ENCODE measurements at regions of chrX and their contacts with region 1.

Region 1: DNA sequence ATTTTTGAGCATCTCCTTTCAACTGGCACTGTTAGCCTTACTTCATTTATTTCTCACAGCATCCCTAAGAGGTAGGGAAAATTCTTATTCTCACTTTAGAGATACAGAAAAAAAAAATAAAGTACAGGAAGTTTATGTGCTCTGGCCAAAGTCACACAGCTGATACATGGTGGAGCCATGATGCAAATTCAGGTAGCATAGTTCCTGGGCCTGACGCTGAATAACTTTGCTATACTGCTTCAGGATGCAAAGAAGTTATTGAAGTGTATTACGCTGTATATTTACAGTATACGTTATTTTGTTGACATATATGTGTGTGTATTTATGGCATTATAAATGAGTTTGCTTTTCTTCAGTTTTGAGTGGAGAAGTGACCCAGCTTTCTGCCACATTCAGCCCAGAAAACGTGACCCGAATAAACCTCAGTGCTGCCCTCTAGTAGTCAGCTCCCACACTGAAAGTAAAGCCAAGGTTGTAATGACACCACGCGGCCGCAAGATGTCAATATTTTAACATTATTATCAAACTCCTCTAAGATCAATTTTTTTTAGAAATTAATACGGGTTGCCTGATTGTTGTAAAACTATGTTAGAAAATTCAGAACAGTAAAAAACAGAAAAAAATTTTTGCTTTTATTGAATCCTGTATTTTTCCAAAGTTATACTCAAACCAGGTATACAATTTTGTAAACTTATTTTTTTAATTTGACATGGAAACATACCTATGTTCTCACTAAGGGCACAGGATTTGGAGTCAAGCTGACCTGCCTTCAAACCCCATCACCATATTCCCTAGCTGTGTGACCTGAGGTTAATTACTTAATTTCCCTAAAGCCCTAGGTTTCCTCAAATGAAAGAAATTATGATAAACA is 3.8 kb upstream of the GUCY2F start:
- DNase-seq: peak; percentile 34 to 71 (median 57)
- H3K4me3 ChIP-seq: no peak overlapping the region
- H3K27ac ChIP-seq: no peak overlapping the region
- H3K4me1 ChIP-seq: no peaks in the 10 kb centered on the region
- H3K27me3 ChIP-seq: no peaks in the 10 kb centered on the region
- CTCF ChIP-seq: peak; percentile 62 to 90 (median 85)
- EP300 ChIP-seq: no peak
- POLR2A ChIP-seq: no peak

Region 2: GRCh38 chrX:109624641-109625616 is 139.2 kb after region 1 on chrX and contains the start of gene KCNE5:
- intact Hi-C with region 1: loop called in 1 of 4 experiments (anchors 10 kb)
- DNase-seq: peak in 4 of 5 donors; percentile 15 to 42 (median 26)
- H3K4me3 ChIP-seq: peak within 1 kb of the TSS; percentile 6
- H3K27ac ChIP-seq: no peak within 1 kb of the TSS
- H3K4me1 ChIP-seq: no peaks in the 10 kb centered on the region
- H3K27me3 ChIP-seq: no peaks in the 10 kb centered on the region
- CTCF ChIP-seq: no peak
- EP300 ChIP-seq: no peak
- POLR2A ChIP-seq: no peak
- total RNA-seq, gene KCNE5: 0.30 to 1.4 (median 0.67) TPM in 6 of 7 donors, not detected in the other

Region 3: GRCh38 chrX:109878236-109878635 is 392.5 kb after region 1 on chrX:
- intact Hi-C with region 1: loop called in 1 of 4 experiments (anchors 5 kb)
- DNase-seq: no peak
- H3K4me3 ChIP-seq: no peak overlapping the region
- H3K27ac ChIP-seq: no peak overlapping the region
- H3K4me1 ChIP-seq: no peaks in the 10 kb centered on the region
- H3K27me3 ChIP-seq: no peaks in the 10 kb centered on the region
- CTCF ChIP-seq: no peak
- EP300 ChIP-seq: no peak
- POLR2A ChIP-seq: no peak

Measured in ovary (tissue), 10 donors.